WTC11 (cell line): ENCODE measurements at regions of chr9 and their contacts with region 1.

Region 1: GRCh38 chr9:6080154-6080716 is 64.8 kb upstream of the RANBP6 start:
- DNase-seq: peak; percentile 97
- ATAC-seq: peak; percentile 95
- H3K4me3 Mint-ChIP-seq: peak overlapping the region; percentile 58
- H3K27ac Mint-ChIP-seq: peak overlapping the region; percentile 88
- H3K4me1 Mint-ChIP-seq: peaks cover 33% of the 10 kb centered on the region
- H3K27me3 Mint-ChIP-seq: no peaks in the 10 kb centered on the region
- CTCF ChIP-seq: no peak

Region 2: GRCh38 chr9:6106576-6107339 is 26.5 kb after region 1 on chr9:
- CTCF ChIA-PET with region 1: interaction called, 13 read pairs
- POLR2A ChIA-PET with region 1: no interaction called
- DNase-seq: peak; percentile 21
- ATAC-seq: peak; percentile 97
- H3K4me3 Mint-ChIP-seq: no peak overlapping the region
- H3K27ac Mint-ChIP-seq: peak overlapping the region; percentile 58; the same call in 1 of the 2 replicates
- H3K4me1 Mint-ChIP-seq: peaks cover 11% of the 10 kb centered on the region
- H3K27me3 Mint-ChIP-seq: no peaks in the 10 kb centered on the region
- CTCF ChIP-seq: no peak